ENCODE measurements at regions of chr17 and their contacts with region 1.

Region 1: GRCh38 chr17:39153599-39154051 is 2.2 kb upstream of the PLXDC1 start:
- DNase-seq: peak; percentile 86
- H3K4me3 Mint-ChIP-seq: peak overlapping the region; percentile 100
- H3K27ac Mint-ChIP-seq: peak overlapping the region; percentile 94
- H3K4me1 Mint-ChIP-seq: peaks cover 17% of the 10 kb centered on the region
- H3K27me3 Mint-ChIP-seq: peaks cover 9% of the 10 kb centered on the region
- CTCF ChIP-seq: no peak

Region 2: DNA sequence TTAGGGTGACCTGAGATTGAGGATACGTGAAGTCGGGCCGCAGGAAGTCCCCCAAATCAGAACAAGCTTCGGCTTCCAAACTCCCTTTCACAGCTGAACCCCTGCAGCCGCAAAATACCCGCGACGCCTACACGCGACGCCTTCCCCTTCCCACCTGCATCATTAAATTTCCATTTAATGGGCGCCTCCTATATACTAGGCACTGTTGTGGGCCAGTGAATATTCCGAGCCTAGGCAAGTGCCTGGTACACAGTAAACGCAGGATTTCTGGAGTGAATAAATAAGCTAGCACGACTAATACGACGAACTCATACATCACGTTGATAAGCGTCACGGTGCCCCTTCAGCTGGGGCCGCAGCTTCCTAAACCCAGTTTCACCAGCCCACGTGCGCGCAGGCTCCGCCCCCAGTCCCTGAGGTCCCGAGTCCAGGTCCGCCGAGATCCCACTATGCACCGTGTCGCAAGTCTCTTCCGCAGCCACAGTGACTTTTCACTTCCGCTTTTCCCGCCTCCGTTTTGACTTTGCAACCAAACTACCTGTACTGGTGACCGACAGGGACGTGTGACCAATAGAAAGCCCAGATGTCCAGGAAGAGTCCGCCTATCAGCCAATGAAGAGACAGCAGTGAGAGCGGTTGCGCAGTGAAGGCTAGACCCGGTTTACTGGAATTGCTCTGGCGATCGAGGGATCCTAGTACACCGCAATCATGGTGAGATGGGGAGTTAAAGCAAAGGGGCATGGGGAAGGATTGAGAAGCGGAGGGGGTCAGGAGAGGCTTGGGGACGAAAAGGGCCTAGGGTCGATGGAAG is 401.3 kb before region 1 on chr17 and contains the start of gene PSMB3:
- CTCF ChIA-PET with region 1: no interaction called
- POLR2A ChIA-PET with region 1: interaction called, 11 read pairs
- intact Hi-C with region 1: no loop called
- DNase-seq: peak; percentile 99
- H3K4me3 Mint-ChIP-seq: peak within 1 kb of the TSS; percentile 96
- H3K27ac Mint-ChIP-seq: peak within 1 kb of the TSS; percentile 98
- H3K4me1 Mint-ChIP-seq: peaks cover 28% of the 10 kb centered on the region
- H3K27me3 Mint-ChIP-seq: no peaks in the 10 kb centered on the region
- CTCF ChIP-seq: no peak
- total RNA-seq, gene PSMB3: 124 and 145 TPM in 2 replicates

Region 3: DNA sequence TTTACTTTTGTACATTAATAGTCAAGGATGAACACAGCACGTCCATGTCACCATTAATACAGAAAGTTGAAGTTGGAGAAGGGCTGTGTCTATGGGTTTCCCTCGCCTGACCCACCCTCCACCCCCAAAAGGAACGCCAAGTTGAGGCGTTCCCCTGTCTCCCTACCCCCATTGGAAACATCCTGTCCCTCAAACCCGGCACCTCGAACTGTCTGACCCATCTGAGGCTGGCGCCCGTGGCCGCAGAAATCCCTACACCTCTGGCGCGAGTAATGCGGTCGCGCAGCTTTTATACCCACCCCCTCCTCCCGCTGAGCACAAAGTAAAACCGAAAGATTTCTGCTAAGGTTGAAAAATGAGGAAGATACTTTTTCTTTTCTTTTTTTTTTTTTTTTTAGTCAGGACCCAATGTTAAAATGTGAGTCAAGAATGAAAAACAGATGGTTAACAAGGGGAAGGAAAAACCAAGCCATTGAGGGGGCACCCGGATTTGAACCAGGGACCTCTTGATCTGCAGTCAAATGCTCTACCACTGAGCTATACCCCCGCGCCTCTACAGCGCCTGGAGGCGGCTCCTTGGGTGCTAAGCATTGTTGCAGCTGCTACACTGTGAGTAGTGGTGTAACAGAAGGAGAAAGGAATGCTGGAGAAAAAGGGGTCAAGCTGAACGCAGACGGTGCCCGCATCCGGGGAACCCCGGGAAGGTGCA is 284.7 kb before region 1 on chr17:
- CTCF ChIA-PET with region 1: interaction called, 10 read pairs
- POLR2A ChIA-PET with region 1: interaction called, 51 read pairs
- intact Hi-C with region 1: loop called (anchors 1 kb)
- DNase-seq: peak; percentile 87
- H3K4me3 Mint-ChIP-seq: peak overlapping the region; percentile 89
- H3K27ac Mint-ChIP-seq: peak overlapping the region; percentile 80
- H3K4me1 Mint-ChIP-seq: peaks cover 38% of the 10 kb centered on the region
- H3K27me3 Mint-ChIP-seq: no peaks in the 10 kb centered on the region
- CTCF ChIP-seq: no peak

Region 4: DNA sequence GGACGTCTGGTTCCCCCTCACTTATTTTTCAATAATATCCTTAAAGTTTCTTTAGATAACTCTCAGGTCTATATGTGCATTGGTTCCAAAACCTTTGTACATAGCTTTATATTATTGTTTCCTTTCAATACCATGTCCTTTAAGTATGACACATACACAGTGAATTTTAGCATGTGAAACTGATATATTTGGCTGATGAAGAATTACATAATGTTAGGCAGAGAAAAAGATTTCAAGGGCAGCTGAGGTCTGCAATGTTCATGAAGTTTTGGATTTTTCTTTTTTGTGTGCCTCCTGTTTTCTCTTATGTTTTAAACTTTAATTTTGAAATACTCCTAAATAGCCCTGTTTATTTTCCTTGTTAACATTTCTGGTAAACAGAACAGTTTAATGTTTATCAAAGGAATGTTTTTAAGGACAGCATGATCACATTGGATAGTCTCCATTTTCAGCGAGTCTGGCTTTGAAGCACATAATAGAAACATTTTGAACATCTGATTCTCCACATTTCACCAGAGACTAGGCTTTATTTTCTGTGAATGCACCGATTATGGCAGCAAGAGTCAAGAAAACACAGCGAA is 153.5 kb before region 1 on chr17:
- CTCF ChIA-PET with region 1: interaction called, 10 read pairs
- POLR2A ChIA-PET with region 1: interaction called, 7 read pairs
- intact Hi-C with region 1: no loop called
- DNase-seq: no peak
- H3K4me3 Mint-ChIP-seq: no peak overlapping the region
- H3K27ac Mint-ChIP-seq: no peak overlapping the region
- H3K4me1 Mint-ChIP-seq: peaks cover 38% of the 10 kb centered on the region
- H3K27me3 Mint-ChIP-seq: no peaks in the 10 kb centered on the region
- CTCF ChIP-seq: no peak

Region 5: DNA sequence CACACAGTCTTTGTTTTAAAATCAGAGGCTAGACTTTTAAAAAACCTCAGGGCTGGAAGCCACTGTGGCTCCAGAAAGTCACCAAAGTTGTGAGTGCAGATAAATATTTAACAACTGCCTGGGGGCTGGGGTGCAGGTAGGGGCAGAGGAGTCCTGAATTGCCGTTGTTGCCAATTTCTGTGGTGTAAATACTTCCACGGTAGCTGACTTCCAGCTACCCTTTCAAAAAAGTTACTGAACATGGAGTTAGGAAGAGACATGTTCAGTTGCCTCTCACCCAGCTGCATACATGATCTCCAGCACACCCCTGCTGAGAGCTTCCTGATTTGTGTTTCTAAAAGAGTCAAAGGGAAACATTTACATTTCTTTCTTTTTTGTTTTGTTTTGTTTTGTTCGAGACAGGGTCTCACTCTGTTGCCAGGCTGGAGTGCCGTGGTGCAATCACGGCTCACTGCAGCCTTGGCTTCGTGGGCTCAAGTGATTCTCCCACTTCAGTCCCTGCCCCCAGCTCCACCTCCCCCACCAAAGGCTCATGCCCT is 60.9 kb before region 1 on chr17:
- CTCF ChIA-PET with region 1: no interaction called
- POLR2A ChIA-PET with region 1: no interaction called
- intact Hi-C with region 1: no loop called
- DNase-seq: no peak
- H3K4me3 Mint-ChIP-seq: no peak overlapping the region
- H3K27ac Mint-ChIP-seq: no peak overlapping the region
- H3K4me1 Mint-ChIP-seq: no peaks in the 10 kb centered on the region
- H3K27me3 Mint-ChIP-seq: peaks cover 16% of the 10 kb centered on the region
- CTCF ChIP-seq: no peak

Region 6: GRCh38 chr17:39164675-39165143 is 11.1 kb after region 1 on chr17:
- CTCF ChIA-PET with region 1: interaction called, 7 read pairs
- POLR2A ChIA-PET with region 1: interaction called, 15 read pairs
- intact Hi-C with region 1: no loop called
- DNase-seq: peak; percentile 80
- H3K4me3 Mint-ChIP-seq: no peak overlapping the region
- H3K27ac Mint-ChIP-seq: no peak overlapping the region
- H3K4me1 Mint-ChIP-seq: peaks cover 18% of the 10 kb centered on the region
- H3K27me3 Mint-ChIP-seq: peaks cover 22% of the 10 kb centered on the region
- CTCF ChIP-seq: peak; percentile 68

Region 7: GRCh38 chr17:39235555-39236449 is 82.2 kb after region 1 on chr17:
- CTCF ChIA-PET with region 1: interaction called, 7 read pairs
- POLR2A ChIA-PET with region 1: no interaction called
- intact Hi-C with region 1: loop called (anchors 5 kb)
- DNase-seq: peak; percentile 73
- H3K4me3 Mint-ChIP-seq: no peak overlapping the region
- H3K27ac Mint-ChIP-seq: no peak overlapping the region
- H3K4me1 Mint-ChIP-seq: peaks cover 33% of the 10 kb centered on the region
- H3K27me3 Mint-ChIP-seq: no peaks in the 10 kb centered on the region
- CTCF ChIP-seq: peak; percentile 78

Region 8: DNA sequence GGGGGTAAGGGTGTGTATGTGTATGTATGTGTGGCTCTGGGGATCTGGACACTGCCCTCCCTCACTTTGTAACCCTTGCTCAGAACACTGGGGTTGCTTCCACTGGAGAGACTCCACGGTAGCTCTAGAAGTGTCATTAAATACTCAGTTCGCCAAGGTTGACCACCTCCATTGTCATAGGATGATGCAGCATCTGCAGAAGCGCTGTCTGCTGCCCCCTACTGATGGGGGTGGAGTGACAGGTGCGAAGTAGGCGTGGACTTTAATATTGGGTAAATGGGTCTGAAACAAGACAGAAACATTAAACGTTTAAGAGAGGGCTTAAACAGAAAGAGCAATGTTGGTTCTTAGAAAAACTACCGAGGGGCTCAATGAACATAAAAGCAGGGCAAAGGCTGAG is 107.7 kb after region 1 on chr17:
- CTCF ChIA-PET with region 1: no interaction called
- POLR2A ChIA-PET with region 1: no interaction called
- intact Hi-C with region 1: no loop called
- DNase-seq: no peak
- H3K4me3 Mint-ChIP-seq: no peak overlapping the region
- H3K27ac Mint-ChIP-seq: no peak overlapping the region
- H3K4me1 Mint-ChIP-seq: no peaks in the 10 kb centered on the region
- H3K27me3 Mint-ChIP-seq: no peaks in the 10 kb centered on the region
- CTCF ChIP-seq: no peak

Region 9: DNA sequence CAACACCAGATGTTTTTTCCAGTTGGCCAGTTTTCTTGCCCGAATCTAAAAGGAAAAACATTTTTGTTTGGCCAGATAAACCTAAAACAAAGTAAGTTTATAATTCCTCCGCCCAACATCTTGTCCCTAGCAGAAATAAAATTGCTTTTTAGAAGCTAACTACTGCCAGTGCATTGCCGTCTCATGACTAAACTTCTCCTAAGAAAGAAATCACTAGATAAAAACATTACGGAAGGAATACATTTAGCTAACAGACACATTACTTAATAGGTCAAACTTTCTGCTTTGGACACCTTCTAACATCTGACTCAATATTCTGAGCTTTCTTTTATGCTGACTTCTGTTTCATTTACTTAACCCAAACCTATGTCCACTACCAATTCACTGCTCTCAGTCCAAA is 211.6 kb after region 1 on chr17:
- CTCF ChIA-PET with region 1: no interaction called
- POLR2A ChIA-PET with region 1: no interaction called
- intact Hi-C with region 1: no loop called
- DNase-seq: no peak
- H3K4me3 Mint-ChIP-seq: no peak overlapping the region
- H3K27ac Mint-ChIP-seq: no peak overlapping the region
- H3K4me1 Mint-ChIP-seq: peaks cover 6% of the 10 kb centered on the region
- H3K27me3 Mint-ChIP-seq: no peaks in the 10 kb centered on the region
- CTCF ChIP-seq: no peak